CD8-positive, alpha-beta T cell (primary cell): ENCODE measurements at regions of chr16 and their contacts with region 1.

Region 1: DNA sequence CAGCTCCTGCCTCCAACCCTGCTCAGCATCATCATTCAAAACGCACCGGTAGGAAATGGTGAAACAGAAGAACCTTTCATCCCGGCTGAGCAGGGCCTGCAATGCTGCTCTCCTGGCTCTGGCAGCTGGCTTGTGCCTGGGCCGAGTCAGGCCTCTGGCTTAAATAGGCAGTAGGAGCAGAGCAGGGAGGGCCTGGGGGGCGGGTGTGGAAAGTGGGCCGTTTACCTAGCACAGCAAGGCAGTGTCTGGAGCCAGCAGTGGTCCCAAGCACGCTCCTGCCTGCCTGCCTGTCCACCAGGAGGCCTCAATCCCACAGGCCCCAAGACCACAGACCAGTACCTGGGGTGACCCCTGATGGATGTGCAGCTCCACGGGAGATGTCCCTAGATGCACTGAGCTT is 59.3 kb downstream of the SMPD3 start:
- DNase-seq: no peak
- ATAC-seq: no peak
- H3K4me3 ChIP-seq: no peak overlapping the region
- H3K4me3 Mint-ChIP-seq: no peak overlapping the region
- H3K27ac ChIP-seq: no peak overlapping the region
- H3K27ac Mint-ChIP-seq: no peak overlapping the region
- H3K4me1 ChIP-seq: no peaks in the 10 kb centered on the region
- H3K4me1 Mint-ChIP-seq: no peaks in the 10 kb centered on the region
- H3K27me3 ChIP-seq: no peaks in the 10 kb centered on the region
- H3K27me3 Mint-ChIP-seq: no peaks in the 10 kb centered on the region
- CTCF ChIP-seq: no peak

Region 2: DNA sequence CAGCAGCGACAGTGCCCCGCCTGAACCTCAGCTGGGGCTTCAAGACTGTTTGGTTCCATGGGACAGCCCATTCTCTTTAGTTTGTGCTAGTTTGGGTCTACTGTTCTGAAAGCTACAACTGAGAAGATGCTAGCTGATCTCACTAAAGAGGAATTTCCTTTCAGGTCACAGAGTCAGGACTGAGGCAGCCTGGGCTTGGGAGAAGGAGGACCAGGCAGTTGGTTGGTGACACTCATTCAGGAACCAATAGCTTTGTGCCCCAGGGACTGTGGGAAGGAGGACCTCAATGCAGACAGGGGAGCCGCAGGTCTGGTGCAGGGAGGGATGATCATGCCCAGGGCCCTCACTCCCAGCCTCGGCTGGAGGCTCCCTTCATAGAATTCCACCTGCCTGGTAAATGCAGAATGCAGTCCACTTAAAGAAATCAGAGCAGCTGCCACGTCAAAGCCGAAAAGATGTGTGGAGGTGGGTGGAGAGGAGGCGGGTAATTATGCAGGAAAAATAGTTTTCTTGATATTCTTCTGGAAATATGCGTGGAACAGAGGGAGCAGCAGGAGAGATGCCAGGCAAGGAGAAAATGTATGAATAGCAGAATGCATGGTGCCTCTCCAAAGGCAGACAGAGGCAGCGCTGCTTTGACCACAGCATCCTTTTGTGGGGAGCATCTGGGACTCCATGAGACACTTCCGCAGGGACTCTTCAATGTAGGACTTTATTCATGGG is 117.5 kb after region 1 on chr16:
- CTCF ChIA-PET with region 1: interaction called, 360 read pairs
- POLR2A ChIA-PET with region 1: no interaction called
- intact Hi-C with region 1: no loop called
- DNase-seq: no peak
- ATAC-seq: no peak
- H3K4me3 ChIP-seq: no peak overlapping the region
- H3K4me3 Mint-ChIP-seq: no peak overlapping the region
- H3K27ac ChIP-seq: no peak overlapping the region
- H3K27ac Mint-ChIP-seq: no peak overlapping the region
- H3K4me1 ChIP-seq: peaks cover 6% of the 10 kb centered on the region
- H3K4me1 Mint-ChIP-seq: peaks cover 2% of the 10 kb centered on the region
- H3K27me3 ChIP-seq: no peaks in the 10 kb centered on the region
- H3K27me3 Mint-ChIP-seq: no peaks in the 10 kb centered on the region
- CTCF ChIP-seq: no peak